ENCODE measurements at regions of chr18 and their contacts with region 1.

Region 1: GRCh38 chr18:42114310-42114943 is 159.4 kb downstream of the PIK3C3 start:
- DNase-seq: peak; percentile 29
- CTCF ChIP-seq: peak; percentile 60

Region 2: GRCh38 chr18:41721103-41721790 is 393.2 kb before region 1 on chr18:
- CTCF ChIA-PET with region 1: no interaction called
- POLR2A ChIA-PET with region 1: no interaction called
- DNase-seq: no peak
- CTCF ChIP-seq: no peak

Region 3: GRCh38 chr18:42053188-42053781 is 61.1 kb before region 1 on chr18:
- CTCF ChIA-PET with region 1: interaction called, 11 read pairs
- POLR2A ChIA-PET with region 1: no interaction called
- DNase-seq: peak; percentile 37
- CTCF ChIP-seq: peak; percentile 71

Region 4: DNA sequence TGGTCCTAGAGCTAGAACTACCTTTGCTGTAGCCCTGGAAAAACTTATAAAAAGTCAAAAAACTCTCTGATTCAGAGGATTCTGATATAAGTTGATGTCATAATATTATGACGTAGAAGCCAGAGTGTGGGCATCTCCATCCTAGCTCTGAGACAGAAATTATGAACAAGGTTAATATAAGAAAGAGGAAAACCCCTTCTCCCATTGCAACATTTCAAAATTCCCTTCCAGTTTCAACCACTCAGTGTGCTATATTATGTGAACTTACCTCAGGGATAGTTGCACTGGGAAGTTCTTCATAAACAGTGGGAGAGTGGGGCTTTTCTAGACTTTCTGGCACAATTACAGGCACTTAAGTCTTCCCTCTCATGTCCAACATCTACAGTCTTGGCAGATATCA is 12.2 kb after region 1 on chr18:
- CTCF ChIA-PET with region 1: interaction called, 43 read pairs
- POLR2A ChIA-PET with region 1: no interaction called
- DNase-seq: no peak
- CTCF ChIP-seq: no peak

Region 5: GRCh38 chr18:42274488-42275137 is 160.2 kb after region 1 on chr18:
- CTCF ChIA-PET with region 1: interaction called, 28 read pairs
- POLR2A ChIA-PET with region 1: no interaction called
- DNase-seq: peak; percentile 11
- CTCF ChIP-seq: peak; percentile 20

Region 6: DNA sequence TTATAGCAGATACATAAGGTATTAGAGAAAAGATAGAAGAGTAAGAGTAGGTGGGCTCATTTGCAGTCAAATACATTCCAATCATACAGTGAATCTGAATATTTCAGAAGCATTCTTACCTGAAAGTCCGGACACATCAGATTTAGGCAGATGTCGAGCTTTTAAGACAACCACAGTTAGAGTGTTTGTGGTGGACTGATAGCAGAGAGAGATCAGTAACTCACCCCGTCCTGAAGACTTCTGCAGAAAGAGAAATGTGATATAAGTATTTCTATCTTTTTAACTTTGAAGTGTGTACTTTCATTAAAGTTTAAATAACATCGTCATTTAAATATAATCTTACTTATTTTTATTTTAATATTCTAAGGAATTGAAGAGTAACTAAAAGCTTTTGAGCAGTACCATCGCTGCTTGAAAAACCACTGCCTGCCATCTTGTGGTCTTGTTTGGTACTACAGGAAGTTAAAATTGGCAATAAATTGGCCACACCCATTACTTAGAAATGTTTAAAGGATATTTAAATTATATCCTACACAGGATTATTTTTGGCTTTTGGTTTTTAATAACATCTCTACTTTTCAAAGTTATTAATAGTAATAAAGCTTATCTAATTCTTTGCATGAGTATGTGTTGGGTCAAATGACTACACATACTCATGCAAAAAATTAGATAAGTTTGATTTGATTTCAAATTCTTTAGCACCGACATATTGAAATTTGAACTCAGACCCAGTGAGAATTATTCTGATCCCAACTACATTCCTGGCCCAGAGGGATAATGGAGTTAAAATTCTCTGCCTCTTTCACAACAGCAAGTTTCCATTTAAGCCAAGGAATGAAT is 1157.4 kb after region 1 on chr18:
- CTCF ChIA-PET with region 1: interaction called, 77 read pairs
- POLR2A ChIA-PET with region 1: no interaction called
- DNase-seq: peak; percentile 17
- CTCF ChIP-seq: peak; percentile 81

Measured in GM10248 (cell line).